Body of pancreas (tissue), 4 donors: ENCODE measurements at regions of chr16 and their contacts with region 1.

Region 1: GRCh38 chr16:87874639-87875465 is 5.5 kb upstream of the SLC7A5 start:
- DNase-seq: no peak
- ATAC-seq: no peak
- H3K4me3 ChIP-seq: no peak overlapping the region
- H3K27ac ChIP-seq: no peak overlapping the region
- H3K4me1 ChIP-seq: peaks cover 26% of the 10 kb centered on the region
- H3K27me3 ChIP-seq: no peaks in the 10 kb centered on the region
- CTCF ChIP-seq: no peak
- POLR2A ChIP-seq: no peak

Region 2: DNA sequence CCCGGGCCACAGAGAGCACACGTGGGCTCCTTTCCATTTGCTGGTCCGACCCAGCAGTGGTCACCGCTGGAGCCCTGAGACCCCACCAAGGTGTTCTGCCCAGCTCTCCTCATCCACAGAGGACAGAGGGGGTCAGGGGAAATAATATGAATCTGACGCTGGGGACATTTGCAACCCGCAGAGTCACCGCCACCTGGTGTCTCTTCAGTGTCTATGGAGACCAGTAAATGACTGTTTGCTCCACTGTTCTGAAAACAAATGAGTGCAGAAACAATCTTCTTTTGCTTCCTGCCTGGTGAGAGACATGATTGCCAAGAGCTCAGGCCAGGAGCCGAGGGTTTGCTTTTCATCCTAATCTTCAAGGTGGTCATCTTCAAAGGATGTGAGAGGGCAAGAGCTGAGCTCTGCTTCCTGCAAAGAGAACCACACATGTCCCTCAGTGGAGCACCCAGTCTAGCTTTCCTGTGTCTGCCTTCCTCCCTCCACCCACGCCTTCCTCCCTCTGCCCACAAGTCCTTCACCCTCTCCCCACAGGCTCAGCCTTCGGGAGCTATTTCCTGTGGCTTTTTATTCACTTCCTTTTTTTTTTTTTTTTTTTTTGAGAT is 94.4 kb before region 1 on chr16:
- intact Hi-C with region 1: loop called (anchors 5 kb)
- DNase-seq: peak in 2 of 4 donors; percentile 11 to 75
- ATAC-seq: no peak
- H3K4me3 ChIP-seq: no peak overlapping the region
- H3K27ac ChIP-seq: peak overlapping the region in 1 of 4 donors; percentile 32
- H3K4me1 ChIP-seq: peaks cover 26% of the 10 kb centered on the region
- H3K27me3 ChIP-seq: no peaks in the 10 kb centered on the region
- CTCF ChIP-seq: no peak
- POLR2A ChIP-seq: no peak

Region 3: GRCh38 chr16:87828071-87828971 is 46.5 kb before region 1 on chr16:
- intact Hi-C with region 1: no loop called
- DNase-seq: peak; percentile 49 to 83 (median 74)
- ATAC-seq: peak; percentile 43
- H3K4me3 ChIP-seq: no peak overlapping the region
- H3K27ac ChIP-seq: no peak overlapping the region
- H3K4me1 ChIP-seq: no peaks in the 10 kb centered on the region
- H3K27me3 ChIP-seq: no peaks in the 10 kb centered on the region
- CTCF ChIP-seq: no peak
- POLR2A ChIP-seq: no peak

Region 4: DNA sequence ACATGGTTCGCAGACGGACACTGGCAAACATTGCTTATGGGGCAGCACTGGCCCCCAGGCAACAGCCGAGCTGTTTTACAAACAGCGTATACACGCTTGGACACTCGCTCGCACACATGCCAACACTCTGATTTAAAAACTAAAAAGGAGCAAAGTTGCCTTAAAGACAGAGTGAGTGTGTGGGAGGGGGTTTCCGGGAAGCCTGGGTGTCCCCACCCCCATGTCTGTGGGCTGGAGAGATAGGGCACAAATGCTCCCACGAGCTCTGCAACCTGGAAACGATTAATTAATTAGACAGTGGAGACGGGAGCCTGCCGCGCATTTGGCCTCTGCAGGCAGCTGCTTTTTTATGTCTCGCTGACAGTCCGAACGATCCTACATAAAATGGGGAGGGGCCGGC is 400.0 kb after region 1 on chr16:
- intact Hi-C with region 1: no loop called
- DNase-seq: no peak
- ATAC-seq: no peak
- H3K4me3 ChIP-seq: no peak overlapping the region
- H3K27ac ChIP-seq: no peak overlapping the region
- H3K4me1 ChIP-seq: no peaks in the 10 kb centered on the region
- H3K27me3 ChIP-seq: no peaks in the 10 kb centered on the region
- CTCF ChIP-seq: no peak
- POLR2A ChIP-seq: no peak

Region 5: GRCh38 chr16:88967830-88968588 is 1093.2 kb after region 1 on chr16:
- intact Hi-C with region 1: no loop called
- DNase-seq: no peak
- ATAC-seq: no peak
- H3K4me3 ChIP-seq: no peak overlapping the region
- H3K27ac ChIP-seq: no peak overlapping the region
- H3K4me1 ChIP-seq: no peaks in the 10 kb centered on the region
- H3K27me3 ChIP-seq: no peaks in the 10 kb centered on the region
- CTCF ChIP-seq: no peak
- POLR2A ChIP-seq: no peak